ENCODE measurements at regions of chr2 and their contacts with region 1.

Region 1: GRCh38 chr2:134683561-134684112 is 35.2 kb downstream of the TMEM163 start:
- DNase-seq: peak; percentile 97
- H3K4me3 ChIP-seq: no peak overlapping the region
- H3K27ac ChIP-seq: peak overlapping the region; percentile 83
- H3K4me1 ChIP-seq: peaks cover 28% of the 10 kb centered on the region
- H3K27me3 ChIP-seq: no peaks in the 10 kb centered on the region
- CTCF ChIP-seq: no peak
- POLR2A ChIP-seq: peak; percentile 67

Region 2: DNA sequence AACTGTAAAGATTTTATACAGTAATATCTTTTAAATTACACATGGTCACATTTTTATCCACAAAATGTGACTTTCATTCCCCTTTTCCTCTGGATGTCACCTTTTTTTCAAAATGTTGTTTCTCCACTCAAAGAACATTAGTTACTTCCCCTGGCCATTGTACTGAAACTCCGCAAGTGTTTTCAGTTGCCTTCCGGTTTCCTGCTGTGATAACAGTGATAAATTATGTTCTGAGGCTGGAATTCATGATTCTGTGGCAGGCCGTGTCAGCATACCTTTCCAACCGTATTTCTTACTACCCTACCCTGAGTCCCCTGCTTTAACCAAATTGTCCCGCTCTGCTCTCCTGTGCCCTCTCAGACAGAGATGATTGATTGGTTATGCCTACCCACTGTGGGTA is 376.3 kb before region 1 on chr2:
- CTCF ChIA-PET with region 1: no interaction called
- POLR2A ChIA-PET with region 1: no interaction called
- dilution Hi-C with region 1: no loop called
- intact Hi-C with region 1: loop called (anchors 2 kb)
- DNase-seq: peak; percentile 91
- H3K4me3 ChIP-seq: peak overlapping the region in 1 of 3 experiments; percentile 26
- H3K27ac ChIP-seq: peak overlapping the region; percentile 91
- H3K4me1 ChIP-seq: peaks cover 72% of the 10 kb centered on the region
- H3K27me3 ChIP-seq: no peaks in the 10 kb centered on the region
- CTCF ChIP-seq: no peak
- POLR2A ChIP-seq: peak; percentile 56

Region 3: GRCh38 chr2:134402410-134402809 is 281.2 kb before region 1 on chr2:
- CTCF ChIA-PET with region 1: no interaction called
- POLR2A ChIA-PET with region 1: no interaction called
- dilution Hi-C with region 1: no loop called
- intact Hi-C with region 1: loop called (anchors 10 kb)
- DNase-seq: peak; percentile 21
- H3K4me3 ChIP-seq: no peak overlapping the region
- H3K27ac ChIP-seq: no peak overlapping the region
- H3K4me1 ChIP-seq: peaks cover 60% of the 10 kb centered on the region
- H3K27me3 ChIP-seq: no peaks in the 10 kb centered on the region
- CTCF ChIP-seq: no peak
- POLR2A ChIP-seq: no peak

Region 4: DNA sequence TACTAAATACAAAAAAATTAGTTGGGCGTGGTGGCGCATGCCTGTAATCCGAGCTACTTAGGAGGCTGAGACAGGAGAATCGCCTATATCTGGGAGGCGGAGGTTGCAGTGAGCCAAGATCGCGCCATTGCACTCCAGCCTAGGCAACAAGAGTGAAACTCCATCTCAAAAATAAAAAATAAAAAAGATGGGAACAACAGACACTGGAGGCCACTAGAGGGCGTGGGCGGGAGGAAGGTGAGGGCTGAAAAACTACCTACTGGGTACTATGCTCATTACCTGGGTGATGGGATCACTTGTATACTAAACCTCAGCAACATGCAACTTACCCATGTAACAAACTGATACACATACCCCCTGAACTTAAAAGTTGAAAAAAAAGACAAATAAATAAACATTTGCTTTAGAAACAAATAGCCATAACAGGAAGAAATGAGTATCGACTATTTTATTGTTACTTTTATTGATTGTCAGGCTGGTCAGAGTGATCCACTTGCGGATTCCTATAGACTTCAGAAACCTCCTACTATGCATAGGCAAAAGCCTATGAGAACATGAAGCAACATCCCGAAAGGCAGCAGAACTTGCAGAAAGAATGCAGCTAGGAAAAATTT is 25.9 kb before region 1 on chr2:
- CTCF ChIA-PET with region 1: interaction called, 11 read pairs
- POLR2A ChIA-PET with region 1: no interaction called
- dilution Hi-C with region 1: no loop called
- intact Hi-C with region 1: loop called (anchors 2 kb)
- DNase-seq: peak; percentile 22
- H3K4me3 ChIP-seq: no peak overlapping the region
- H3K27ac ChIP-seq: no peak overlapping the region
- H3K4me1 ChIP-seq: no peaks in the 10 kb centered on the region
- H3K27me3 ChIP-seq: peaks cover 0 to 3% of the 10 kb centered on the region in 2 experiments
- CTCF ChIP-seq: peak; percentile 54 to 59
- POLR2A ChIP-seq: no peak

Region 5: GRCh38 chr2:134706587-134707329 is 23.1 kb after region 1 on chr2:
- CTCF ChIA-PET with region 1: interaction called, 4 read pairs
- POLR2A ChIA-PET with region 1: no interaction called
- dilution Hi-C with region 1: no loop called
- intact Hi-C with region 1: loop called (anchors 1 kb)
- DNase-seq: peak; percentile 66
- H3K4me3 ChIP-seq: no peak overlapping the region
- H3K27ac ChIP-seq: peak overlapping the region; percentile 36
- H3K4me1 ChIP-seq: peaks cover 15% of the 10 kb centered on the region
- H3K27me3 ChIP-seq: no peaks in the 10 kb centered on the region
- CTCF ChIP-seq: no peak
- POLR2A ChIP-seq: peak; percentile 30

Region 6: GRCh38 chr2:134736167-134736880 is 52.7 kb after region 1 on chr2:
- CTCF ChIA-PET with region 1: interaction called, 3 read pairs
- POLR2A ChIA-PET with region 1: no interaction called
- dilution Hi-C with region 1: no loop called
- intact Hi-C with region 1: loop called (anchors 1 kb)
- DNase-seq: peak; percentile 80
- H3K4me3 ChIP-seq: no peak overlapping the region
- H3K27ac ChIP-seq: peak overlapping the region; percentile 37
- H3K4me1 ChIP-seq: peaks cover 29% of the 10 kb centered on the region
- H3K27me3 ChIP-seq: no peaks in the 10 kb centered on the region
- CTCF ChIP-seq: no peak
- POLR2A ChIP-seq: peak; percentile 41

Region 7: DNA sequence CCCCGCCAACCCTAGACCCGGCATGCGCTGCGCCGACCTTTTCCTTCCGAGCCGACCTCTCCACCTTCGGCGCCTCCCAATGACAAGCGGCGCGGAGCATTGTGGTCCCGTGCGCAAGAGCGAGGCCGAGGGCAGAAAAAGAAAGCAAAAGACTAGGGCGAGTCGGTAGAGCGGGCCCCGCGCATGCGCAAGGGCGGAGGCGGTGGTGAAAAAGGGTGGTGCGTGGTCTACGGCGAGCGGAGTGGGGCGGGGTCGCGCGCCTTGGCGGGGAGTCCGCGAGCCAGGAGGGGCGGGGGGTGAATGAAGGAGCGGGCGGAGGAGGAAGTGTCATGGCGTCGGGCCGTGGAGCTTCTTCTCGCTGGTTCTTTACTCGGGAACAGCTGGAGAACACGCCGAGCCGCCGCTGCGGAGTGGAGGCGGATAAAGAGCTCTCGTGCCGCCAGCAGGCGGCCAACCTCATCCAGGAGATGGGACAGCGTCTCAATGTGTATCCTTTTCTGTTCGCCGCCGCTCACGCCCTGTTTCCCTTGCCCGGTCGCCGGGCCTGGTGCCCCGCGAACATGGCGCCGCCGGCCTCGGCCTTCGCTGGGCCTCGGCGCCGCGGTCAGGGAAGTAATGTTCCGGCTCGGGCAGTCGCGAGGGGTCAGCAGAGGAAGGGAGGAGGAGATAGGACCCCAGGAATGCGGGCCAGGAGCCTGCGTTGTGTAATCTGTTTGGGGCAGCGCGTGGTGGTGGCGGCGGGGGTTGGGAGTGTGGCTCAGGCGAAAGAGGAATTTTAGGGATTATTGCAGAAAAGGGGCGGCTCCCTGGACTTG is 235.1 kb after region 1 on chr2 and contains the start of gene CCNT2:
- CTCF ChIA-PET with region 1: no interaction called
- POLR2A ChIA-PET with region 1: no interaction called
- dilution Hi-C with region 1: no loop called
- intact Hi-C with region 1: loop called (anchors 1 kb)
- DNase-seq: peak; percentile 99
- H3K4me3 ChIP-seq: peak within 1 kb of the TSS; percentile 93 to 100 (median 100)
- H3K27ac ChIP-seq: peak within 1 kb of the TSS; percentile 91
- H3K4me1 ChIP-seq: peaks cover 17% of the 10 kb centered on the region
- H3K27me3 ChIP-seq: no peaks in the 10 kb centered on the region
- CTCF ChIP-seq: no peak
- POLR2A ChIP-seq: peak; percentile 63
- total RNA-seq, gene CCNT2: 35.4 and 35.5 TPM in 2 replicates